A549 (cell line): ENCODE measurements at regions of chr15 and their contacts with region 1.

Region 1: GRCh38 chr15:78108299-78109084 is 16.1 kb downstream of the SH2D7 start:
- DNase-seq: peak; percentile 89 to 98
- ATAC-seq: peak; percentile 85 to 96
- H3K4me3 ChIP-seq: no peak overlapping the region
- H3K27ac ChIP-seq: no peak overlapping the region
- H3K4me1 ChIP-seq: no peaks in the 10 kb centered on the region
- CTCF ChIP-seq: peak; percentile 99
- EP300 ChIP-seq: no peak
- POLR2A ChIP-seq: no peak
- RAD21 ChIP-seq: peak; percentile 92 to 95

Region 2: DNA sequence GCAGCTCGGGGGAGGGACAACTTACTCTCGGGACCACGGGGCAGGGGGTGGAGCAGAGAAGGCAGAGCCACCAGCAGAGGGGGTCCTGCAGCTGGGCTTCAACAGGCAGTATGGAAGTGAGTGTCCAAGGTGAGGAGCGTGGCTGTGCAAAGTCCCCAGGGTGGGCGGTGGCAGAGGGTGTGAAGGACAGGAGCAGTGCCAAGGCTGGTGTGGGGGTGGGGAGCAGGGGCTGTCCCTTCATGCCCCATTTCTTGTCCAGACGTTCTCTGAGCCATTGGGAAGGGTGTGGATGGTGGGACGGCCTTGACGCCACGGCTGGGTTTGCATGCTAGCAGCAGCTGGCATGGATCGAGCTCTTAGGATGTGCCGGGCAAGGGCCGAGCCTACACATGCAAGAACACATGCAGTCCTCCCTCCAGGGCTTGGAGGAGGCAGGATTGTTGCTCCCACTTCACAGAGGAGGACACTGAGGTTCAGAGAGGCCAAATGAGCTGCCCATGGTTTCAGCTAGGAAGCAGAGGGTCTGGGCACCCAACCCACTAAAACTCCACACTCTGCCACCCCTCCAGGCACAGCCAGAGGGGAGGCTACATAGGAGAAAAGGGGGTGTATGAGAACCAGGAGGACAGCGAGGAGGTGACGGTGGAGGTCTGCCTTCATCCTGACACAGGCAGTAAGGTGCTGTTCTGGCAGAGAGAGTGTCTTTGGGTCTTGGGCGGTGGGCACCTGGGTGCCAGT is 124.6 kb before region 1 on chr15:
- CTCF ChIA-PET with region 1: interaction called, 29 read pairs
- POLR2A ChIA-PET with region 1: no interaction called
- DNase-seq: no peak
- ATAC-seq: no peak
- H3K4me3 ChIP-seq: no peak overlapping the region
- H3K27ac ChIP-seq: no peak overlapping the region; a peak in 1 of 6 replicates
- H3K4me1 ChIP-seq: no peaks in the 10 kb centered on the region
- CTCF ChIP-seq: no peak
- EP300 ChIP-seq: no peak
- POLR2A ChIP-seq: no peak
- RAD21 ChIP-seq: no peak

Region 3: DNA sequence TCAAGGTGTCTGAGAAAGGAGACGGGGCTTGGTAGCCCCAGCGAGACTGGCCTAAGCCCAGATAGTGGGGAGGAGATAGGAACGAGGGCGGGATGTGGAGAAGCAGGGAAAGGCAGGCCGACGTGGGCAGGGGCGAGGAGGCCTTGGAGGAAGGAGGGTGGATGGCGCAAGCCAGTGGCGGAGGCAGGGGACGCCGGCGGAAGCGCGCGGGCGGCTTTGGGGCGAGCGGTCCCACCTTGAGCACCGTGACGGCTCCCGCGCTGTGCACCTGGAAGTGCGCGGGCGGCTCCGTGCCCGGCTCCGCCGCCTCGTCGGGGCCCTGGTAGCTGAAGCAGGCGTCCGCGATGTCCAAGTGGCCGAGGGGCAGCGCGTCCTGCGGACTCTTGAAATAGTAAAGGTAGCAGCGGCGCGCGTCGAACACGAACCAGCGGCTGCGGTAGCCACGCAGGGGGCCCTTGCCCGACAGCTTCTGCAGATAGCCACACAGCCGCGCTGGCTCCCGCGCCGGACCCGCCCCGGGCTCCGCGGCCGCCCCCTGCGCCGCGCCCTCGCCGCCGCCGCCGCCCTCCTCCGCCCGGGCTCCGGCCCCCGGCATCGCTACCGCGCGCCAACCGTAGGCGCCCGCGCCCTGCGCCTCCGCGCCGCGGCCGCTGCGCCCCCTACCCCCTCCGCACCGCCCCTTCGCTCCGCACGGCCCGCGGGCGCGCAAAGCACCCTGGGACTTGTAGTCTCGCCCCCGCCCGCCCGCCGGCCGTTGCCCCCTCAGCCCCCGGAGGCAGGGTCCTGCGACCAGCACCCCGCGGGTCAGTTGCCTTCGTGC is 31.2 kb before region 1 on chr15 and contains the start of gene TBC1D2B:
- CTCF ChIA-PET with region 1: interaction called, 57 read pairs
- POLR2A ChIA-PET with region 1: no interaction called
- DNase-seq: peak; percentile 55 to 58
- ATAC-seq: peak; percentile 80 to 83
- H3K4me3 ChIP-seq: peak within 1 kb of the TSS; percentile 83
- H3K27ac ChIP-seq: peak within 1 kb of the TSS; percentile 81 to 91
- H3K4me1 ChIP-seq: peaks cover 20% of the 10 kb centered on the region
- CTCF ChIP-seq: peak; percentile 31; the same call in 1 of the 3 replicates
- EP300 ChIP-seq: no peak
- POLR2A ChIP-seq: peak; percentile 65
- RAD21 ChIP-seq: no peak
- polyA plus RNA-seq, gene TBC1D2B: 13.9 and 14.9 TPM in 2 replicates

Region 4: DNA sequence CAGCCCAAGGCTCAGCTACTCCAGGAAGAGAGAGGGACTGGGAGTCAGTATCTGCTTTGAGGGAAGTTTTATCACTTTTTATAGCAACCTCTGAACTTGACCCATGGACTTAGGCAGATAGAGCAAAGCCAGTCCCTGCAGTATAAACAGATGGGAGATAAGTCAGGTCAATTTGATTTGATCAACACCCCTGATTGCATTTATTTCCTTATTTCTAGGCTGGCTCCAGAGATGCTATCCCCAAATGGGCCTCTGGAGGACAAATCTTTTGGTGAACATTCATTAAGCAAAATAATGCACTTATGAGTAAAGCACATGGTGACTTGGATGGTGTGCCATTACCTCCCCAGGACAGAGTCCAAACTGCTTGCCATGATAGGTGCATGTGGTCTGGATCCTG is 31.8 kb after region 1 on chr15:
- CTCF ChIA-PET with region 1: interaction called, 16 read pairs
- POLR2A ChIA-PET with region 1: no interaction called
- DNase-seq: no peak
- ATAC-seq: peak in 1 of 2 experiments; percentile 48; a peak in 2 of 6 replicates
- H3K4me3 ChIP-seq: no peak overlapping the region
- H3K27ac ChIP-seq: no peak overlapping the region
- H3K4me1 ChIP-seq: no peaks in the 10 kb centered on the region
- CTCF ChIP-seq: no peak
- EP300 ChIP-seq: no peak
- POLR2A ChIP-seq: no peak
- RAD21 ChIP-seq: no peak

Region 5: DNA sequence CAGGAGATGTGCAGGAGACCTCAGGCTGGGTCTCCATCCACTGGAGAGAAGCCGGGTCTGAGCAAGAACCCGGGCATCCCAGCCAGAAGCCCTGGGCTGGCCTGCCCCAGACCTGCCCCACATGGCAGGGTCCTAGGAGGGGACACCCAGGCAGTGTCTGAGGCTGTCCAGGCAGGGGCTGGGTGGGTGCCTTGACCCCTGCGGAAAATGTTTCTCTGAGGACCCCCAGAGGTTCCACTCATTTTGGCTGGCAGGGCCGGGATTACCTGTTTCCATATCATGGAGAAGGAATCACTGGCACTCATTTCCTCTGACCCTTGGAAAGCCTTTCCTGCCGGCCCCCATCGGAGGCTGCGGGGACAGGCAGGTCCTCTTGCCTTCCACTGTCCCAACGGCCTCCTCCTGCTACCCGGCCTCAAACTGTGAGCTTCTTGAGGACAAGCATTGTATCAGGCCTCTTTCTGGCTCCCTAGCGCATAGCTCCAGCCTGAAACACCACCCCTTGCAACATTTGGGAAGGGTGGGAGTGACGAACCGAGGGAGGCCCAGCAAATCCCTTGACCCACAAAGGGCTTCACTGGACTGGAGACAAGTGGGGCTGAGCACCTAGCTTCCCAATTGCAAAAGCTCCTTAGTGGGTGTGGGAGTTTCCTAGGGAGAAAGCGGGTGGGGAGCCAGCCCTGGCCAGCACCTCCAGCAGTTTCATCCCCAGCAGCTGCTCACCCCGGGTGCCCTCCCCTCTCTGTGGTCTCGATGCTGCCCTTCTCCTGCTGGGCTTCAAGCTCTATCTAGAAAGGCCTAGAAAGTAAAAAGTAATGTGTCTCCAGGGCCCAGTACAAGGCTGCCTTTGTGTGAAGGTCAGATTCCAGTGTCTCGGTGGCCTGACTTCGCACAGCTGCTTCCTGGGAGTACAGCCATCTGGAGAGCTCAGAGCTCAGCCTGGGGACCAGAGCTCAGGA is 96.1 kb after region 1 on chr15:
- CTCF ChIA-PET with region 1: interaction called, 10 read pairs
- POLR2A ChIA-PET with region 1: no interaction called
- DNase-seq: no peak
- ATAC-seq: no peak; a peak in 1 of 6 replicates
- H3K4me3 ChIP-seq: no peak overlapping the region
- H3K27ac ChIP-seq: no peak overlapping the region
- H3K4me1 ChIP-seq: 0 out of 3 replicates have a peak, but pooled peaks cover 3% of the 10 kb centered on the region
- CTCF ChIP-seq: no peak
- EP300 ChIP-seq: no peak
- POLR2A ChIP-seq: no peak
- RAD21 ChIP-seq: no peak

Region 6: GRCh38 chr15:78249131-78249530 is 140.6 kb after region 1 on chr15:
- CTCF ChIA-PET with region 1: interaction called, 251 read pairs
- POLR2A ChIA-PET with region 1: no interaction called
- DNase-seq: no peak
- ATAC-seq: no peak
- H3K4me3 ChIP-seq: no peak overlapping the region
- H3K27ac ChIP-seq: no peak overlapping the region
- H3K4me1 ChIP-seq: no peaks in the 10 kb centered on the region
- CTCF ChIP-seq: no peak
- EP300 ChIP-seq: no peak
- POLR2A ChIP-seq: no peak
- RAD21 ChIP-seq: no peak